T-cell (primary cell): ENCODE measurements at regions of chr11 and their contacts with region 1.

Region 1: DNA sequence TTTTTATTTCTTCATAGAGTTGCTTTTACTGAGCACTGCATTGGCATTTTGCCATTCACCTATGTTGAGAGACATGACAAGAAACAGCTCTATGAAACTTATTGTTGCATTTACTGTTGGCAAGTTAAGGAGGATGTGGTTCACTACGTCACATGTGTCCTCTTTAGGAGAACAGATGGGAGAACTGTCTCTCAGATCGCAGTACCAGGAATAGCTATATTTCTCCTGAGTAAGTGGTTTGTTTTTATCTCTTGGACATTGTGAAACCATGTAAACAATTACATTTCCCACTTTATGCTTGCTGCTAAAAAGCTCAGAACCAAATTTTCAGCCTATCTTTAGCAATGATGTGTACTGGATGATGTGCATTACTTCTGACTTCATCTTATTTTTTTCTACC is 34.8 kb upstream of the PSMA1 start:
- DNase-seq: peak in 26 of 35 experiments; percentile 8 to 85 (median 48)
- ATAC-seq: peak; percentile 87 to 97 (median 94)
- H3K4me3 ChIP-seq: no peak overlapping the region
- H3K4me3 Mint-ChIP-seq: peak overlapping the region; percentile 15 to 43 (median 28)
- H3K27ac ChIP-seq: peak overlapping the region; percentile 58
- H3K27ac Mint-ChIP-seq: peak overlapping the region; percentile 93
- H3K4me1 ChIP-seq: peaks cover 4 to 25% of the 10 kb centered on the region in 2 experiments
- H3K4me1 Mint-ChIP-seq: peaks cover 40 to 52% (median 48%) of the 10 kb centered on the region in 3 donors
- H3K27me3 ChIP-seq: no peaks in the 10 kb centered on the region
- H3K27me3 Mint-ChIP-seq: no peaks in the 10 kb centered on the region

Region 2: DNA sequence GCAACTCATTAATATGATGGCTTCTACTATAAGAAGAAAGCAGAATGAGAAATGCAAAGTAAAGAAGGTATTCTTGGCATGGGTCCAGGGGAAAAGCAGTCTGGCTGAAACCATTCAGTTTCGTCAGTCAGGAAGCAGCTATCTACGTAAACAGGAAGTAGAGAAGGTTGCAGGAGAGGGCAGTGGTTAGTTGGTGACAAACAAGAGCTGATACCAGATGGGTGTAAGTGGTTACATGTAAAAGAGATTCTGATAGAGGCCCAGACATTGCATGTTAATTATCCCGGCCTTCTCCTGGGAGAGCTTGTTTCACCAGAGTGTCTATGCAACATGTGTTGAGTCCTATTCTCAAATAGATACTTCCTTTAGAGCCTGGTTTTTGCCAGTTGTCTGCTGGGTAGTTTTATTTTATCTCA is 23.6 kb after region 1 on chr11:
- CTCF ChIA-PET with region 1: interaction called, 4 to 11 read pairs
- POLR2A ChIA-PET with region 1: interaction called, 4 to 12 read pairs
- DNase-seq: peak; percentile 26 to 96 (median 70)
- ATAC-seq: peak; percentile 98 to 99 (median 98)
- H3K4me3 ChIP-seq: no peak overlapping the region
- H3K4me3 Mint-ChIP-seq: peak overlapping the region; percentile 45 to 63 (median 50)
- H3K27ac ChIP-seq: peak overlapping the region; percentile 91
- H3K27ac Mint-ChIP-seq: peak overlapping the region; percentile 88 to 93
- H3K4me1 ChIP-seq: peaks cover 22 to 35% of the 10 kb centered on the region in 2 experiments
- H3K4me1 Mint-ChIP-seq: peaks cover 60 to 71% (median 68%) of the 10 kb centered on the region in 3 donors
- H3K27me3 ChIP-seq: no peaks in the 10 kb centered on the region
- H3K27me3 Mint-ChIP-seq: no peaks in the 10 kb centered on the region